Ovary (tissue), 10 donors: ENCODE measurements at regions of chr1 and their contacts with region 1.

Region 1: DNA sequence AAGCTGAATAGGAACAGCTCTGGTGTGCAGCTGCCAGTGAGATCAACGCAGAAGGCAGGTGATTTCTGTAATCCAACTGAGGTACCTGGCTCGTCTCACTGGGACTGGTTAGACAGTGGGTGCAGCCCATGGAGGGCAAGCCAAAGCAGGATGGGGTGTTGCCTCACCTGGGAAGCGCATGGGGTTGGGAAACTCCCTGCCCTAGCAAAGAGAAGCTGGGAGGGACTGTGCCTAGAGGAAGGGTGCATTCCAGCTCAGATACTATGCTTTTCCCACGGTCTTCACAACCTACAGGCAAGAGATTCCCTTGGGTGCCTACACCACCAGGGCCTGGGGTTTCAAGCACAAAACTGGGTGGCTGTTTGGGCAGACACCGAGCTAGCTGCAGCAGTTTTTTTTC is 183.2 kb downstream of the DNM3 start:
- DNase-seq: no peak
- H3K4me3 ChIP-seq: no peak overlapping the region
- H3K27ac ChIP-seq: no peak overlapping the region
- H3K4me1 ChIP-seq: no peaks in the 10 kb centered on the region
- H3K27me3 ChIP-seq: no peaks in the 10 kb centered on the region
- CTCF ChIP-seq: no peak
- EP300 ChIP-seq: no peak
- POLR2A ChIP-seq: no peak

Region 2: DNA sequence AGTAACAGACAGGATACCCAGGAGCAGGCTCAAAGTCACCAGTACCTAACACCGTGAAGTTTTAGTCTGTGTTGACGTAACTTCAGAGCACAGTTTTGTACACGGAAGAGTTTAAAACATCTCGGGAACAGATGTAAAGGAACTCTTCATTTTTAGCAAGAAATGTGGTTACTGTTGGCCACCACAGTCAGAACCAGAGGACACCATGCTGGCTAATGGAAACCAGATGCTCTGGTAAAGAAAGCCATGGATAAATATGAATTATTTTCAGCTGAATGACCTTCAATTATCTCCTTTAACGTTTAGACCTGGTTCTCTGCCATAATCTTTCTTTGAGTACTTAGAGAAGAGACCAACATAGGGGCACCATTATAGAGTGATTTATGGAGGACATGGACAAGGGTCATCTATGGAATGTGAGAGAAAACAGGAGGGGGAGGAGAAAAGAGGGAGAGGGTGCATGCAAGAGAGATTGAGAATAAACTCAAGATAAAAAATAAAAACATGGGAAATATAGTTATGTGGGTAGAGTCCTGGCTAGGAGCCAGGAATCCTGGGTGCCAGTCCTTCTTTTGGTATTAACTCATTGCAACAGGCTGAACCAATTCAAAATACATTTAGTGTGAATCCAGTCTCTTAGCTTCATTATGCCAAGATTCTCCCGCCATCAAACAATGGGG is 1762.7 kb before region 1 on chr1:
- intact Hi-C with region 1: no loop called
- DNase-seq: no peak
- H3K4me3 ChIP-seq: no peak overlapping the region
- H3K27ac ChIP-seq: no peak overlapping the region
- H3K4me1 ChIP-seq: peaks cover 1% of the 10 kb centered on the region
- H3K27me3 ChIP-seq: no peaks in the 10 kb centered on the region
- CTCF ChIP-seq: no peak
- EP300 ChIP-seq: no peak
- POLR2A ChIP-seq: no peak

Region 3: DNA sequence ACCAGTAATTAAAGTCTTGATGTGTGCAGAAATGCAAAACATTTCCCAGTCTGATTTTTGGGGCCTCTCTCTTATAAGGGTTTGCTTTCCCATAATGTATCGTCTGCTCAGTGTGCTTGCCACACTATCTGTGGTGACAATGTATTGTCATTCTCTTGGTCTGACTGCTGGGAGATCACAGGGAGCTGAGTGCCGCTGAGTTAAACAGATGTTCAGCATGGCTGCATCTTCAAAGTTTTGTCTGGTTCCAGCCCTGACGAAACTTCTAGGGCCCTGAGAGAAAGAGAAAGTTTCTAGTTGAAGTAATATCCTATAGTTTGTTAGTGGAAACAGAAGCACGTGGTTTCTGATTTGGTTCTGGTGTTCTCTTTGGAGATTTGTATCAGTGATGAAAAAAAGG is 140.7 kb before region 1 on chr1:
- intact Hi-C with region 1: no loop called
- DNase-seq: no peak
- H3K4me3 ChIP-seq: no peak overlapping the region
- H3K27ac ChIP-seq: no peak overlapping the region
- H3K4me1 ChIP-seq: no peaks in the 10 kb centered on the region
- H3K27me3 ChIP-seq: peaks cover 4% of the 10 kb centered on the region
- CTCF ChIP-seq: no peak
- EP300 ChIP-seq: no peak
- POLR2A ChIP-seq: no peak

Region 4: DNA sequence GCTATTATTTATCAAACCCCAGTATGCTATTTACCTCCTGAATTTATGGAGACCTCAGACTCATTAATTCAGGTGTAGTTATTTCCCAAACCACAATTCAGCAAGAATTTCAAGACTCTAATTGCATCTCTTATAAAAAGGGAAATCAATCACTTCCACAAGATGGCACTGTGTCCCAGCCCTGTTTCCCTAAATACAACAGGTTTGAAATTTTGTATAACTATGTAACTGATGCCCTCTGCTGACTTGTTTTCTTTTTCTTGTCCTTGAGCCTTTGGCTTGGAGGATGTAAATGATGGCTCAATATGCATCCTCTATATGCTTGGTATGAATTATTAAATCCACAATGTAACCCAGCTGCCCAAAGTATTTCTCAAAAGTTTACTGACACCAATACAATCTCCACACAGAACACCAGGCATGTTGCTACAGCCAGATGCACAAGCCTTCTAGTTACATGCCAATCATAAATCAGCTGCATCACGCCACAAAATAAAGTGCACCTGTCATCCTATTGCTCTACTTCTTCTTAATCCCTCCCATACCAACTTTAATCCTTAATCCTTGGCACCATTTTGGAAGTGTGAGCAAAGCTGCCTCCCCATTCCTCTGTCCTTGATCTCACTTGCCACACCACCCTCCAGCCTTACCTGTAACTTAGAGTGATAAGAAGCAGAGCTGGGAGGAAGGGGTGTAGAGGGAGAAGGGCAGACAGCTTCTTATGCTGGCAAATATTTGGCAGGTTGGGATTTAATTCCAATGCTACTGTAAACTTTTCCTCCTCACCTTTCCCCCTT is 405.0 kb after region 1 on chr1:
- intact Hi-C with region 1: loop called in 1 of 4 experiments (anchors 10 kb)
- DNase-seq: peak in 1 of 5 donors; percentile 34
- H3K4me3 ChIP-seq: no peak overlapping the region
- H3K27ac ChIP-seq: no peak overlapping the region
- H3K4me1 ChIP-seq: no peaks in the 10 kb centered on the region
- H3K27me3 ChIP-seq: no peaks in the 10 kb centered on the region
- CTCF ChIP-seq: peak; percentile 41 to 69 (median 65)
- EP300 ChIP-seq: no peak
- POLR2A ChIP-seq: no peak

Region 5: DNA sequence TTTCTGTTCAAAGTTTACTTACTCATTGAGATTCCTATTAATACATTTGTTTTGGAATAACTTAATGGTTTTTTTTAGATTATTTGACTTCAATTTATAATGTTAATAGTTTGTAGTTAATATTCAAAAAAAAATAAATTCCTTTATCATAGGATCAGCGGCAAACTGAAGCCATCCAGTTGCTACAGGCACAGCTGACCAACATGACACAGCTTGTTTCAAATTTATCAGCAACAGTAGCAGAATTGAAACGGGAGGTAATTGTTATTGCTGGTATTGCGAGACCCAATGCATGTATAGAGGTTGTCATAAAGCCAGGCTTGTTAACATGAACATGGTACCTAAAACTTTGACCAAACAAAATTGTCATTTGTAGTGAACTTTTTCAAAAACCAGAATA is 575.4 kb after region 1 on chr1:
- intact Hi-C with region 1: loop called in 1 of 4 experiments (anchors 5 kb)
- DNase-seq: no peak
- H3K4me3 ChIP-seq: no peak overlapping the region
- H3K27ac ChIP-seq: no peak overlapping the region
- H3K4me1 ChIP-seq: no peaks in the 10 kb centered on the region
- H3K27me3 ChIP-seq: no peaks in the 10 kb centered on the region
- CTCF ChIP-seq: no peak
- EP300 ChIP-seq: no peak
- POLR2A ChIP-seq: no peak

Region 6: DNA sequence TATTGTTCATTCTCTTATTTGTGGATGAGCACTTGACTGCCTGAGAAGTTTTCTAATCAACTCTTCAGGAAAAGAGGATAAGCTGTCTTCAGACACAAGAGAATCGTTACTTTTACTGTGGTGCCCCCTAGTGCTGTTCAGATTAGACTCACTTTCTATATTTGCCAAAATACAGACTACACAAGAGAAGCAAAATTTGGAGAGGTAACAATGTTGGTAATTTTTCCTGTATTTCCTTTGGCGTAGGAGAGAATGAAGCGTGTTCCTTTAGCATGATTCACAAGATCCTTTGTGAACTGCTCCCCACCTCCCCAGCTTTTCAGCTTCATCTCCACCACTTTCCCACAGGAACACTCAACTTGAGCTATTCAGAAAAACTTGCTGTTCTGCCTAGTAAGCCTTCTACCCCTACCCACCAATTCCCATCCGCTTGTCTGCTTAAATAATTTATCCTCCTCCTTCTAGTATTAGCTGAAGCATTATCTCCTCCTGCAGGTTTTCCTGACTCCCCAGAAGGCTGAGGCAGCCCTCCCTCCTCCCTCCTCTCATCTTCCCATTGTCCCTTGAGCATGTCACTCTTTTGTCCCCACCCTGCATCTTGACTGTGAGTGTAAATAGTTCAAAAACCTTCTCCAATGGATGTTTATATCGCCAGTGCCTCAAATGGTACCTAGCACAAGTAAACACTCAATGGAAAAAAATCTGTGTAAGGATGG is 1178.1 kb after region 1 on chr1:
- intact Hi-C with region 1: no loop called
- DNase-seq: no peak
- H3K4me3 ChIP-seq: no peak overlapping the region
- H3K27ac ChIP-seq: no peak overlapping the region
- H3K4me1 ChIP-seq: peaks cover 11% of the 10 kb centered on the region
- H3K27me3 ChIP-seq: no peaks in the 10 kb centered on the region
- CTCF ChIP-seq: peak in 2 of 3 donors; percentile 40 to 43
- EP300 ChIP-seq: no peak
- POLR2A ChIP-seq: no peak